ENCODE measurements at regions of chr16 and their contacts with region 1.

Region 1: GRCh38 chr16:57519796-57520360 is 16.5 kb downstream of the CCDC102A start:
- DNase-seq: peak; percentile 89
- CTCF ChIP-seq: peak; percentile 98

Region 2: DNA sequence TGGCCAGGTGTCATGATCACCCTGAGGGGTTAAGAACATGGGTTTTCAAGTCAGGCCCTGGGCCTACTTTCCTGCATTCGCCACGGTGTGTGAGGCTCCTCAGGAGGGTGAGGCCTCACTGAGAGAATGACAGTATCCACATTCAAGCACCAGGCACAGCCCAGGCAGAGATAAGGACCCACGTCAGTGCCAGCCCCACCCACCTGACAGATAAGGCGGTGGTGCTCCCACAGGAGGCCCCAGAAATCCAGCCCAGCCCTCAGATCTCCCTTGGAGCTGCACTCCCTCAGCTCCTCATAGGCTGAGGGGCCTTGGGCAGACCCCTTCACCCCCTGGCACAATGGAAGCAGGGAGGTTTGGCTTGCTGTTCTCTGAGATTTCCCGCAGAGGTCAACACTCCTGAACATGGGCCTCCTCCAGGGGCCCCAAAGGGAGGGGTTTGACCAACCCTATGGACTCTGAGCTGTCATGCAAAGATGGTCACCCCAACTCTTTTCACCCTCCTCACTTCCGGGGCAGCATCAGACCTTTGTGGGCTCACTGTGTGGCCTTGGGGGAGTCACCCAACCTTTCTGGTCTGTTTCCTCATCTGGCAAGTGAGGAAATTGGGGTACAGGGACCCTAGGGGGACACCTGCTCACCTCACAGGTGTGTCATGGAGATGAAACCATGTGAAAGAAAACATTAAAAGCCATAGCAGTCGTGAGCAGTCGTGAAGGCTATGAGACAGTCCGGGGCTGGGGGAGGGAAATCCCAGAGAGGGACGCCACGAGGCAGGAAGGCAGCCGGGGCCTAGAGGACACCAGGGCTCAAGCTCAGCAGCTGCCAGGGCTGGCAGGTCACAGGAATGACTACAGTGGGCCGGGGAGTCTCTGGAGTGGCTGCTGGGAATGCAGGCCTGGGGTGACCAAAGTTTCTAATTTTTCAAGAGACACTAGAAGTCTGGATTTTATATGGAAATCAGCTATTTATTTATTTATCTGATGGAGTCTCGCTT is 250.8 kb before region 1 on chr16:
- CTCF ChIA-PET with region 1: no interaction called
- POLR2A ChIA-PET with region 1: no interaction called
- DNase-seq: no peak
- CTCF ChIP-seq: no peak

Region 3: GRCh38 chr16:57300387-57301125 is 219.3 kb before region 1 on chr16:
- CTCF ChIA-PET with region 1: interaction called, 14 read pairs
- POLR2A ChIA-PET with region 1: no interaction called
- DNase-seq: peak; percentile 95
- CTCF ChIP-seq: peak; percentile 96

Region 4: GRCh38 chr16:57422026-57422944 is 97.6 kb before region 1 on chr16:
- CTCF ChIA-PET with region 1: interaction called, 85 read pairs
- POLR2A ChIA-PET with region 1: no interaction called
- DNase-seq: no peak
- CTCF ChIP-seq: peak; percentile 43

Region 5: DNA sequence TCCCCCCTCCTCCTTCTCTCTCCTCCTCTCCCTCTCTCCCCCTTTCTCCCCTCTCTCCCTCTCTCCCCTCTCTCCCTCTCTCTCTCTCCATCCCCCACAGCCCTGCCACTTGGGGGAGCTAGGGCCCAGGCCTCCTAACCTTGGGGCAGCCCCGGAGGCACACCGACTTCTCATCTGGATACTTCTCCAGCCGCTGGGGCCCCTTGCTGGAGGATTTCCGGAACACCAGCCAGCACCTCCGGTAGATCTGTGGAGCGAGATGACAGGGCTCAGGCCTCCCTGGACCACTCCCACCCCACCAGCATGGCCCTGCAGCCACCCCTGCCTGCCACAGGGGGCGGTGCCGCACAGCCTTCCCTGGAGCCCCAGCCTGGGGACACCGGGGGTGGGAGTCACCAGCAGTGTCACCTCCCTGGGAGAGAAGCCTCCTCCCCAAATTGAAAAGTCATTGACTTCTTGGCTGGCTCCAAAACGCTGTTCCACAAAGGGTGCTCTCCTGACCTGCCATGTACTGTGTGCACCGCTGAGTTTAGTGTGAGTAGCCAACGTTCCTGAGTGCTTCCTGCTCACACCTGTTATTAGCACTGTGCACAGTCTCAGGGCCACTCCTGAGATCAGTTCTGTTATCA is 44.1 kb before region 1 on chr16:
- CTCF ChIA-PET with region 1: interaction called, 12 read pairs
- POLR2A ChIA-PET with region 1: no interaction called
- DNase-seq: peak; percentile 89
- CTCF ChIP-seq: peak; percentile 49

Region 6: DNA sequence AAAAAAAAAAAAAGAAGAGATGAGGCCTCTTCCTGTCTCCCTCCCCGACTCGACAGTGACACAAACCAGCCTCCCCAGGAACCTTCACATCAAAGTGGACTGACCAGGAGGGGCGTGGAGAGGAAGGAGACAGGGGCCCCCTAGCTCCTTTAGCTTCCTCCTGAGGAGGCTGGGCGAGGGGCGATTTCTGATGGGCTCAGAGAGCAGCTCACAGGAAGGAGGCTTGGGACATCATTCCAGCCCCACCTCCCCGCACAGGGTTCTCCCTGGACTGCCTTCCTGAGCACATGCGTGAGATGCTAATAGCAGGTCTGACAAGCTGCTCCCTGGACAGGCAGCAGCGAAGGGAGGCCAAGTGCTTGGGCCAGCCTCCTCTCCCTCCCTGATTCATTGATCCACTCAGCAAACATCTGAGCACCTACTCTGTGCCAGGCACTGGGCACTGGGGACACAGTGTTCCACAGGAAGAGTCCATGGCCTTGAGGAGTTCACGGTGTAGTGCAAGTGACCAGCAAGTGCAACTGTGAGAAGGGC is 19.2 kb before region 1 on chr16:
- CTCF ChIA-PET with region 1: interaction called, 19 read pairs
- POLR2A ChIA-PET with region 1: no interaction called
- DNase-seq: no peak
- CTCF ChIP-seq: no peak

Region 7: GRCh38 chr16:57530104-57530521 is 10.2 kb after region 1 on chr16:
- CTCF ChIA-PET with region 1: interaction called, 14 read pairs
- POLR2A ChIA-PET with region 1: interaction called, 4 read pairs
- DNase-seq: peak; percentile 77
- CTCF ChIP-seq: no peak

Region 8: GRCh38 chr16:57544119-57544653 is 24.3 kb after region 1 on chr16:
- CTCF ChIA-PET with region 1: interaction called, 19 read pairs
- POLR2A ChIA-PET with region 1: no interaction called
- DNase-seq: peak; percentile 72
- CTCF ChIP-seq: no peak

Measured in GM10248 (cell line).